ENCODE measurements at regions of chr5 and their contacts with region 1.

Region 1: GRCh38 chr5:154189819-154190594 is 526 bp upstream of the GALNT10 start:
- DNase-seq: peak; percentile 94
- ATAC-seq: peak; percentile 85
- H3K4me3 ChIP-seq: peak overlapping the region; percentile 74 to 84 (median 82)
- H3K4me3 Mint-ChIP-seq: peak overlapping the region; percentile 92
- H3K27ac ChIP-seq: peak overlapping the region; percentile 75 to 78
- H3K27ac Mint-ChIP-seq: peak overlapping the region; percentile 90
- H3K4me1 ChIP-seq: peaks cover 23 to 31% of the 10 kb centered on the region in 2 donors
- H3K4me1 Mint-ChIP-seq: peaks cover 48% of the 10 kb centered on the region
- H3K27me3 ChIP-seq: no peaks in the 10 kb centered on the region
- H3K27me3 Mint-ChIP-seq: no peaks in the 10 kb centered on the region
- CTCF ChIP-seq: peak; percentile 71

Region 2: GRCh38 chr5:154228696-154229095 is 38.7 kb after region 1 on chr5:
- CTCF ChIA-PET with region 1: interaction called, 3 read pairs
- POLR2A ChIA-PET with region 1: no interaction called
- intact Hi-C with region 1: loop called (anchors 2 kb)
- DNase-seq: peak; percentile 60
- ATAC-seq: peak; percentile 91
- H3K4me3 ChIP-seq: peak overlapping the region in 4 of 5 experiments; percentile 6 to 69 (median 45)
- H3K4me3 Mint-ChIP-seq: peak overlapping the region; percentile 89
- H3K27ac ChIP-seq: peak overlapping the region; percentile 75 to 77
- H3K27ac Mint-ChIP-seq: peak overlapping the region; percentile 84
- H3K4me1 ChIP-seq: peaks cover 31 to 35% of the 10 kb centered on the region in 2 donors
- H3K4me1 Mint-ChIP-seq: peaks cover 44% of the 10 kb centered on the region
- H3K27me3 ChIP-seq: no peaks in the 10 kb centered on the region
- H3K27me3 Mint-ChIP-seq: no peaks in the 10 kb centered on the region
- CTCF ChIP-seq: no peak

Region 3: DNA sequence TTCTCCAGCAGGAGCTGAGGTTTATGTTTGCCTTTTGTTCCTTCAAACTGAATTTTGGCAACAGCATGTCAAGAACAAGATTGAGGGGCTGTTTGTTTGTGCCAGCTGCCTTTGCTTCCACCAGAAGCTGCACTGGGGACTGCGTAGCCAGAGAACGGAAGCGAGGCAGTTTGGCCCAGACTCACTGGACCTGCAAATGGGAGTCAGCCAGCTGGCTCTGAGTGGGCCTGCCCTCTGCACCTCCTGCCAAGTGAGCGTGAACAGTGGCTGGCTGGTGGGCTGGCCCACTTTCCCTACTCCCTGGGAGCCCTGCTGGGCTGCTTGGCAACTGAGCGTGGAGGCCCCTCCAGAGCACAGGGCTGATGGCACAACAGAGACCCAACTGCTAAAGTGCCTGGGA is 112.2 kb after region 1 on chr5:
- CTCF ChIA-PET with region 1: no interaction called
- POLR2A ChIA-PET with region 1: no interaction called
- intact Hi-C with region 1: no loop called
- DNase-seq: no peak
- ATAC-seq: no peak
- H3K4me3 ChIP-seq: no peak overlapping the region
- H3K4me3 Mint-ChIP-seq: no peak overlapping the region
- H3K27ac ChIP-seq: no peak overlapping the region
- H3K27ac Mint-ChIP-seq: no peak overlapping the region
- H3K4me1 ChIP-seq: peaks cover 17 to 19% of the 10 kb centered on the region in 2 donors
- H3K4me1 Mint-ChIP-seq: peaks cover 24% of the 10 kb centered on the region
- H3K27me3 ChIP-seq: no peaks in the 10 kb centered on the region
- H3K27me3 Mint-ChIP-seq: no peaks in the 10 kb centered on the region
- CTCF ChIP-seq: no peak

Region 4: GRCh38 chr5:154368041-154368800 is 178.2 kb after region 1 on chr5:
- CTCF ChIA-PET with region 1: no interaction called
- POLR2A ChIA-PET with region 1: no interaction called
- intact Hi-C with region 1: no loop called
- DNase-seq: no peak
- ATAC-seq: no peak
- H3K4me3 ChIP-seq: no peak overlapping the region
- H3K4me3 Mint-ChIP-seq: no peak overlapping the region
- H3K27ac ChIP-seq: no peak overlapping the region
- H3K27ac Mint-ChIP-seq: no peak overlapping the region
- H3K4me1 ChIP-seq: no peaks in the 10 kb centered on the region
- H3K4me1 Mint-ChIP-seq: no peaks in the 10 kb centered on the region
- H3K27me3 ChIP-seq: no peaks in the 10 kb centered on the region
- H3K27me3 Mint-ChIP-seq: no peaks in the 10 kb centered on the region
- CTCF ChIP-seq: no peak

Region 5: GRCh38 chr5:154384480-154385235 is 194.7 kb after region 1 on chr5:
- CTCF ChIA-PET with region 1: interaction called, 12 read pairs
- POLR2A ChIA-PET with region 1: interaction called, 5 read pairs
- intact Hi-C with region 1: no loop called
- DNase-seq: peak; percentile 89
- ATAC-seq: peak; percentile 86
- H3K4me3 ChIP-seq: peak overlapping the region in 4 of 5 experiments; percentile 18 to 56 (median 26)
- H3K4me3 Mint-ChIP-seq: peak overlapping the region; percentile 87
- H3K27ac ChIP-seq: peak overlapping the region; percentile 88 to 95
- H3K27ac Mint-ChIP-seq: peak overlapping the region; percentile 94
- H3K4me1 ChIP-seq: peaks cover 25 to 32% of the 10 kb centered on the region in 2 donors
- H3K4me1 Mint-ChIP-seq: peaks cover 31% of the 10 kb centered on the region
- H3K27me3 ChIP-seq: no peaks in the 10 kb centered on the region
- H3K27me3 Mint-ChIP-seq: no peaks in the 10 kb centered on the region
- CTCF ChIP-seq: no peak

Region 6: DNA sequence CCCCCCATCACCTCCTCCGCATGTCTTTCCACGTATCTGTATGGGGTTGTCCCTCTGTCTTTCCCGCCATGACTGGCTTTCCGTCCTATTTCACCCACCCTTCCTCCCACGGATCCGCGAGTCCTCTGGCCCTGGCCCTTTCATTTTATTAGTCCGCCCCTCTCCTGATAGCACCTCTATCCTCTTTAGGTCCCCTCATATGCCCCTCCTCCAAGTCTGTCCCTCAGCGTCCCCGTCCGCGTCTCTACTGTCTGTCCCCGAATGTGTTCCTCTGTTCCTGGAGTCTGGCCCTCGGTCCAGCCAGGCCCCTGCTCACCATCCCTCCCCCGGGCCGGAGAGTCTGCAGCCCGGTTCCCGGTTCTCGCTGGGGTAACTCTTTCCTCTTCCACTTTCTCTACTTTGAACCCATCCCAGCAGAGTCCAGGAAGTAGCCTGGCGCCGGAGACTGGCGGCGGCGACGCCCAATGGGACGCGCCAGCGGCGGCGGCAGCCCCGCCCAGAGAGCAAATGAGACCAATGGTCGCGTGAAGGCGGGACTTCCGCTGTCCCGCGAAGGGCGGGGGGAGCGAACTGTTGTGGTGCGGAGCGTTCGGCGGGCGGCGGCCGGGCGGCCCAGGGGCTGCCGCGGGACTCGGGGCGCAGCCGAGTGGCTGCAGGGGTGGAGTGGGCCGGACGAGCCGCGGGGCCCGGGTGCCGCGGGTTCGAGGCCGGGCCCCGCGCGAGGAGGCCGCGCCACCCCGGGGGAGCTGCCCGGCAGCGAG is 255.6 kb after region 1 on chr5 and contains the start of gene SAP30L:
- CTCF ChIA-PET with region 1: no interaction called
- POLR2A ChIA-PET with region 1: no interaction called
- intact Hi-C with region 1: loop called (anchors 1 kb)
- DNase-seq: peak; percentile 97
- ATAC-seq: peak; percentile 96
- H3K4me3 ChIP-seq: peak within 1 kb of the TSS; percentile 78 to 99 (median 90)
- H3K4me3 Mint-ChIP-seq: peak within 1 kb of the TSS; percentile 98
- H3K27ac ChIP-seq: peak within 1 kb of the TSS; percentile 9 to 75
- H3K27ac Mint-ChIP-seq: peak within 1 kb of the TSS; percentile 93
- H3K4me1 ChIP-seq: peaks cover 24 to 32% of the 10 kb centered on the region in 2 donors
- H3K4me1 Mint-ChIP-seq: peaks cover 53% of the 10 kb centered on the region
- H3K27me3 ChIP-seq: no peaks in the 10 kb centered on the region
- H3K27me3 Mint-ChIP-seq: no peaks in the 10 kb centered on the region
- CTCF ChIP-seq: no peak
- total RNA-seq, gene SAP30L: 41.5 and 50.0 TPM in 2 replicates